CD8-positive, alpha-beta T cell (primary cell): ENCODE measurements at regions of chr5 and their contacts with region 1.

Region 1: GRCh38 chr5:146965761-146966659 is 87.5 kb upstream of the PPP2R2B start:
- DNase-seq: peak; percentile 8 to 79 (median 36)
- ATAC-seq: peak; percentile 67
- H3K4me3 ChIP-seq: no peak overlapping the region
- H3K4me3 Mint-ChIP-seq: no peak overlapping the region
- H3K27ac ChIP-seq: no peak overlapping the region
- H3K27ac Mint-ChIP-seq: no peak overlapping the region
- H3K4me1 ChIP-seq: no peaks in the 10 kb centered on the region
- H3K4me1 Mint-ChIP-seq: no peaks in the 10 kb centered on the region
- H3K27me3 ChIP-seq: no peaks in the 10 kb centered on the region
- H3K27me3 Mint-ChIP-seq: no peaks in the 10 kb centered on the region
- CTCF ChIP-seq: peak; percentile 86

Region 2: GRCh38 chr5:146541958-146542849 is 423.8 kb before region 1 on chr5:
- CTCF ChIA-PET with region 1: interaction called, 77 read pairs
- POLR2A ChIA-PET with region 1: no interaction called
- intact Hi-C with region 1: loop called (anchors 1 kb)
- DNase-seq: peak; percentile 46 to 80 (median 67)
- ATAC-seq: peak; percentile 85
- H3K4me3 ChIP-seq: no peak overlapping the region
- H3K4me3 Mint-ChIP-seq: no peak overlapping the region
- H3K27ac ChIP-seq: no peak overlapping the region
- H3K27ac Mint-ChIP-seq: no peak overlapping the region
- H3K4me1 ChIP-seq: no peaks in the 10 kb centered on the region
- H3K4me1 Mint-ChIP-seq: no peaks in the 10 kb centered on the region
- H3K27me3 ChIP-seq: no peaks in the 10 kb centered on the region
- H3K27me3 Mint-ChIP-seq: no peaks in the 10 kb centered on the region
- CTCF ChIP-seq: peak; percentile 95

Region 3: GRCh38 chr5:146565764-146566367 is 400.1 kb before region 1 on chr5:
- CTCF ChIA-PET with region 1: interaction called, 25 read pairs
- POLR2A ChIA-PET with region 1: no interaction called
- intact Hi-C with region 1: loop called (anchors 1 kb)
- DNase-seq: peak; percentile 8 to 76 (median 51)
- ATAC-seq: peak; percentile 100
- H3K4me3 ChIP-seq: no peak overlapping the region
- H3K4me3 Mint-ChIP-seq: no peak overlapping the region
- H3K27ac ChIP-seq: no peak overlapping the region
- H3K27ac Mint-ChIP-seq: no peak overlapping the region
- H3K4me1 ChIP-seq: no peaks in the 10 kb centered on the region
- H3K4me1 Mint-ChIP-seq: peaks cover 5% of the 10 kb centered on the region
- H3K27me3 ChIP-seq: no peaks in the 10 kb centered on the region
- H3K27me3 Mint-ChIP-seq: no peaks in the 10 kb centered on the region
- CTCF ChIP-seq: no peak

Region 4: DNA sequence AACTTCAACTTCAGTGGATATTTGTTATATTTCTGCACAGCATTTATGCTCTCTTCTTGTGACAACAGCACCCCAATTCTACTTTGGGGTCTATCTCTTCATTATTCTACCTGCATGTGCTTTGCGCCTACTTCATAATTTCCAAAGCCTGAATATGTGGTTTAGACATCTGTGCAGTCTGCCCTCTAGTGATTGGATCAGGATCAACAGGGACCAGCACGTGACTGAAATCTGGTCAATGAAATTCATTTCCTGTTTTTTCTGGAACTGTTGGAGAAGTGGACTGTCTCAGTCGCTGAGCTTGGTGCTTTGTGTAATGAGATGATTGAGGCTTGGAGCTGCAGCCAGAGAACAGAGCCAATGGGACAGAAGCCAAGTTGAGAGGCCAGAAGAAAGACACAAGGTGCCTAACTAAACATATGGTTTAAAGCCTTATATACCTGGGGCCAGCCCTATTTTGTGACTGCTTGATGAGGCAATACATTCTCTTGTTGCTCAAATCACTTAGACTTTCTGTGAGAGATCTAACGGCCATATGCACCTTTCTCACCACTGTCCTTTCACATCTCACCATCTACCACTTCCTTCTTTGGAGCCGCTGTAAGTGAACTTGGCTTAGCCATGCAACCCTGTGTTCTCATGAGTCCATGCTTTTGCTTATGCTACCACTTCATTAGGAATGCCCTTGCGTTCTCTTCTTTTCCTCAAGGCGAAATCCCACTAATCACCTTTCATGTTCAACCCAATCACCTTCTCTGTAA is 18.6 kb before region 1 on chr5:
- CTCF ChIA-PET with region 1: interaction called, 13 read pairs
- POLR2A ChIA-PET with region 1: no interaction called
- intact Hi-C with region 1: no loop called
- DNase-seq: peak in 3 of 9 experiments; percentile 6 to 54 (median 43)
- ATAC-seq: no peak
- H3K4me3 ChIP-seq: no peak overlapping the region
- H3K4me3 Mint-ChIP-seq: no peak overlapping the region
- H3K27ac ChIP-seq: no peak overlapping the region
- H3K27ac Mint-ChIP-seq: no peak overlapping the region
- H3K4me1 ChIP-seq: no peaks in the 10 kb centered on the region
- H3K4me1 Mint-ChIP-seq: peaks cover 6% of the 10 kb centered on the region
- H3K27me3 ChIP-seq: no peaks in the 10 kb centered on the region
- H3K27me3 Mint-ChIP-seq: peaks cover 6% of the 10 kb centered on the region
- CTCF ChIP-seq: no peak

Region 5: GRCh38 chr5:147101659-147102369 is 135.8 kb after region 1 on chr5:
- CTCF ChIA-PET with region 1: no interaction called
- POLR2A ChIA-PET with region 1: no interaction called
- intact Hi-C with region 1: no loop called
- DNase-seq: no peak
- ATAC-seq: no peak
- H3K4me3 ChIP-seq: no peak overlapping the region
- H3K4me3 Mint-ChIP-seq: no peak overlapping the region
- H3K27ac ChIP-seq: no peak overlapping the region
- H3K27ac Mint-ChIP-seq: no peak overlapping the region
- H3K4me1 ChIP-seq: no peaks in the 10 kb centered on the region
- H3K4me1 Mint-ChIP-seq: no peaks in the 10 kb centered on the region
- H3K27me3 ChIP-seq: no peaks in the 10 kb centered on the region
- H3K27me3 Mint-ChIP-seq: no peaks in the 10 kb centered on the region
- CTCF ChIP-seq: no peak

Region 6: DNA sequence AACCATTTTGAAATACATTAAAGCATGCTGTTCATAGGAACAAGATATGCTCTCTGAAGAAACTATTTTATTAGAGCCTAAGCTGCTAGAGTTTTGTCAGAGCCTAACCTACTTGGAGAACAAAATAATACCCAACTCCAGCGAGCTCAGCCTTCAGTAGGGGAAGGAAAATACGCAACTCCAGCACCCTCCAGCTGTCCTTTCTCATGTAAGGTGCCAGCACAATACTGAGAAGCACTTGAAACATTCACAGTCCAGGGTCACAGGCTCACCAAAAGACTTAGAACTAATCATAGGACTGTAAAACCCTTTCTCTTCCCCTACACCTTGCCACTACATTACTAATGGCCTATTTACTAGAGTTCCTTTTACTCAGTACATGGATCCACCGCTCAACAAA is 525.0 kb after region 1 on chr5:
- CTCF ChIA-PET with region 1: no interaction called
- POLR2A ChIA-PET with region 1: no interaction called
- intact Hi-C with region 1: no loop called
- DNase-seq: no peak
- ATAC-seq: no peak
- H3K4me3 ChIP-seq: no peak overlapping the region
- H3K4me3 Mint-ChIP-seq: no peak overlapping the region
- H3K27ac ChIP-seq: no peak overlapping the region
- H3K27ac Mint-ChIP-seq: no peak overlapping the region
- H3K4me1 ChIP-seq: no peaks in the 10 kb centered on the region
- H3K4me1 Mint-ChIP-seq: no peaks in the 10 kb centered on the region
- H3K27me3 ChIP-seq: no peaks in the 10 kb centered on the region
- H3K27me3 Mint-ChIP-seq: peaks cover 15% of the 10 kb centered on the region
- CTCF ChIP-seq: no peak